SK-N-SH (cell line): ENCODE measurements at regions of chr3 and their contacts with region 1.

Region 1: DNA sequence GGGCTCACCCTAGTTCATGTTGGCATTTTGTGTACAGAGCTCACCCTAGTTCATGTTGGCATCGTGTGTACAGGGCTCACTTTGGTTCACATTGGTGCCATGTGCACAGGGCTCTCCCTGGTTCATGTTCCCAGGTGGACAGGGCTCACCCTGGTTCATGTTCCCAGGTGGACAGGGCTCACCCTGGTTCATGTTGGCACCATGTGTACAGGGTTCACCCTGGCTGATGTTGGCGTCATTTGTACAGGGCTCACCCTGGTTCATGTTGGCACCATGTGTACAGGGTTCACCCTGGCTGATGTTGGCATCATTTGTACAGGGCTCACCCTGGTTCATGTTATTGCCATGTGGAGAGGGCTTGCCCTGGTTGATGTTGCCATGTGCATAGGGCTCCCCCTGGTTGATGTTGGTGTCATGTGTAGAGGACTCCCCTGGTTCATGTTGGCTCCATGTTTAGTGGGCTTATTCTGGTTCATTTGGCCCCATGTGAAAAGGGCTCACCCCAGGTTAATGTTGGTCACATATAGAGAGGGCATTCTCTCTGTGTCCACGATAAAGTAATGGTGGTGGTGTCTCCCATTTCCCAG is 31.7 kb upstream of the NR2C2 start:
- DNase-seq: no peak
- H3K4me3 ChIP-seq: no peak overlapping the region
- H3K27ac ChIP-seq: no peak overlapping the region
- H3K4me1 ChIP-seq: peaks cover 0 to 26% of the 10 kb centered on the region in 2 experiments; a peak in 1 of 4 replicates
- H3K27me3 ChIP-seq: peaks cover 9% of the 10 kb centered on the region; the same call in 1 of the 2 replicates
- CTCF ChIP-seq: no peak
- EP300 ChIP-seq: no peak
- RAD21 ChIP-seq: peak; percentile 63

Region 2: GRCh38 chr3:14680716-14681115 is 235.0 kb before region 1 on chr3:
- CTCF ChIA-PET with region 1: interaction called, 202 read pairs
- POLR2A ChIA-PET with region 1: no interaction called
- DNase-seq: no peak
- H3K4me3 ChIP-seq: no peak overlapping the region
- H3K27ac ChIP-seq: no peak overlapping the region
- H3K4me1 ChIP-seq: peaks cover 0 to 14% of the 10 kb centered on the region in 2 experiments; a peak in 2 of 4 replicates
- H3K27me3 ChIP-seq: no peaks in the 10 kb centered on the region
- CTCF ChIP-seq: no peak
- EP300 ChIP-seq: no peak
- RAD21 ChIP-seq: no peak

Region 3: DNA sequence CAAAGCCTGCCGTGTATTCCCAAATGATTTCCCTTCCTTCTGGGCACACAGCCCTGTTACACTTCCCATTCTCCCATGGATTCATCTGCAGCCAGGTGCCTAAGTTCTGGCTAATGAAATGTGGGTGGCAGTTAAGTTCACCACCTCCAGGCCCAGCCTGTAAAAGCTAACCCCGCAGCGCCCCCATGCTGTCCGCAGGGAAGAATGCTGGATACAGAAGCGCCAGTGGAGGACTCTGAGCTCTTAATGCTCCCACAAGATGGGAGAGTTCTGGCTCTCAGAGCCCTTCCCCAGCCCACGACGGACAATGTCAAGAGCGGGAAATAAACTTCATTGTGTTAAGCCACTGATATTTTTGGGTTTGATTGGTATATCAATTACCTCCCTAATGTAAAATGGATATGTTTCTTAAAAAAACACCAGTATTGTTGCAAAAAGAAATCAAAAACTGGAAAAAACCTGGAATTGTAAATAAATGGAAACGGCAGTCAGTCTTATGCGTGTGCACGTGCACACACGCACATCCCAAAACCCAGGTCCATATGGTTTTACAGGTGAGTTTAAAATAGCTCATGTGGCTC is 134.7 kb before region 1 on chr3:
- CTCF ChIA-PET with region 1: interaction called, 30 read pairs
- POLR2A ChIA-PET with region 1: interaction called, 5 read pairs
- DNase-seq: no peak
- H3K4me3 ChIP-seq: no peak overlapping the region; a peak in 1 of 4 replicates
- H3K27ac ChIP-seq: no peak overlapping the region
- H3K4me1 ChIP-seq: peaks cover 0 to 15% of the 10 kb centered on the region in 2 experiments; a peak in 1 of 4 replicates
- H3K27me3 ChIP-seq: no peaks in the 10 kb centered on the region
- CTCF ChIP-seq: peak; percentile 34; the same call in 1 of the 2 replicates
- EP300 ChIP-seq: no peak
- RAD21 ChIP-seq: peak; percentile 70

Region 4: GRCh38 chr3:14791343-14791945 is 124.3 kb before region 1 on chr3:
- CTCF ChIA-PET with region 1: interaction called, 134 read pairs
- POLR2A ChIA-PET with region 1: no interaction called
- DNase-seq: peak; percentile 85
- H3K4me3 ChIP-seq: no peak overlapping the region
- H3K27ac ChIP-seq: no peak overlapping the region
- H3K4me1 ChIP-seq: peaks cover 0 to 4% of the 10 kb centered on the region in 2 experiments; a peak in 1 of 4 replicates
- H3K27me3 ChIP-seq: no peaks in the 10 kb centered on the region
- CTCF ChIP-seq: peak; percentile 60
- EP300 ChIP-seq: no peak
- RAD21 ChIP-seq: peak; percentile 88

Region 5: DNA sequence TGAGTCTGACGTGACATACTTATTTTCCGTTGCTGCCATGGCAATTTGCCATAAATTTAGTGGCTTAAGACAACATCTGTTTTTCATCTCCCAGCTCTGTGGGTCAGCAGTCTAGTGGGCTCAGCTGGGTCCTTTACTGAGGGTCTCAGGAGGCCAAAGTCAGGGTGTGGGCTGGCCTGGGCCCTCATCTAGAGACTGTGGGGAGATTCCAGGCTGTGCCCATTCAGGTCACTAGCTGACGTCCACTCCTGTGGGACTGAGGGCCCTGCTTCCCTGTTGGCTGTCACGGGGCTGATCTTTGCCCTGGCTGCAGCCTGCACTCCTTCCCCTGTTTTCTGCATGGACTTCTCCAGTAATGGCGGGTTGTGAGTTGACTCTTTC is 77.9 kb before region 1 on chr3:
- CTCF ChIA-PET with region 1: interaction called, 12 read pairs
- POLR2A ChIA-PET with region 1: no interaction called
- DNase-seq: peak; percentile 58
- H3K4me3 ChIP-seq: no peak overlapping the region
- H3K27ac ChIP-seq: no peak overlapping the region; a peak in 1 of 4 replicates
- H3K4me1 ChIP-seq: peaks cover 0 to 29% of the 10 kb centered on the region in 2 experiments; a peak in 1 of 4 replicates
- H3K27me3 ChIP-seq: peaks cover 12% of the 10 kb centered on the region
- CTCF ChIP-seq: no peak
- EP300 ChIP-seq: no peak
- RAD21 ChIP-seq: no peak

Region 6: GRCh38 chr3:14857506-14857905 is 58.2 kb before region 1 on chr3:
- CTCF ChIA-PET with region 1: interaction called, 60 read pairs
- POLR2A ChIA-PET with region 1: no interaction called
- DNase-seq: peak; percentile 59
- H3K4me3 ChIP-seq: no peak overlapping the region
- H3K27ac ChIP-seq: no peak overlapping the region
- H3K4me1 ChIP-seq: peaks cover 0 to 6% of the 10 kb centered on the region in 2 experiments; a peak in 1 of 4 replicates
- H3K27me3 ChIP-seq: no peaks in the 10 kb centered on the region; the same call in 1 of the 2 replicates
- CTCF ChIP-seq: 0 out of 2 replicates have a peak, but pooled peaks have one; percentile 8
- EP300 ChIP-seq: no peak
- RAD21 ChIP-seq: peak; percentile 81

Region 7: GRCh38 chr3:14899993-14900618 is 15.6 kb before region 1 on chr3:
- CTCF ChIA-PET with region 1: interaction called, 12 read pairs
- POLR2A ChIA-PET with region 1: no interaction called
- DNase-seq: no peak
- H3K4me3 ChIP-seq: no peak overlapping the region
- H3K27ac ChIP-seq: no peak overlapping the region
- H3K4me1 ChIP-seq: peaks cover 0 to 3% of the 10 kb centered on the region in 2 experiments; a peak in 1 of 4 replicates
- H3K27me3 ChIP-seq: no peaks in the 10 kb centered on the region
- CTCF ChIP-seq: no peak
- EP300 ChIP-seq: no peak
- RAD21 ChIP-seq: no peak

Region 8: DNA sequence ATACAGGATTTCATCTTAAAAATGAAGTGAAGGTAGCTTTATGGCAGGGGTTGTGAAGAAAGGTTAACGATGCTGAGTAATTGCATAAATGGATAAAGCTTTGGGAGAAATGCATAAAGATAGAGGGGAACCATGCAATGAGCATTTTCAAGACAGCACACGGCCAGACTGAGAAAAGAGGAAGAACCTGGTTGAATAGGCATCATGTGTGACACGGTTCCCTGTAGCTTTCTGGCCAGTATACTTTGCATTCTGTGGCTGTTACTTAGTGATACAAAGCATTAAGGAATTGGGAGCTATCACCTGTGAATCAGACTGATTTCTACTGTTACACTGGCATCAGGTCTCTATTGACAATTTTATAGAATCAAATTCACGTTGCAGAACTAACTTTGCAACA is 65.0 kb after region 1 on chr3:
- CTCF ChIA-PET with region 1: no interaction called
- POLR2A ChIA-PET with region 1: no interaction called
- DNase-seq: no peak
- H3K4me3 ChIP-seq: no peak overlapping the region
- H3K27ac ChIP-seq: no peak overlapping the region
- H3K4me1 ChIP-seq: peaks cover 0 to 12% of the 10 kb centered on the region in 2 experiments; a peak in 2 of 4 replicates
- H3K27me3 ChIP-seq: no peaks in the 10 kb centered on the region
- CTCF ChIP-seq: no peak
- EP300 ChIP-seq: no peak
- RAD21 ChIP-seq: no peak